ENCODE measurements at regions of chr7 and their contacts with region 1.

Region 1: DNA sequence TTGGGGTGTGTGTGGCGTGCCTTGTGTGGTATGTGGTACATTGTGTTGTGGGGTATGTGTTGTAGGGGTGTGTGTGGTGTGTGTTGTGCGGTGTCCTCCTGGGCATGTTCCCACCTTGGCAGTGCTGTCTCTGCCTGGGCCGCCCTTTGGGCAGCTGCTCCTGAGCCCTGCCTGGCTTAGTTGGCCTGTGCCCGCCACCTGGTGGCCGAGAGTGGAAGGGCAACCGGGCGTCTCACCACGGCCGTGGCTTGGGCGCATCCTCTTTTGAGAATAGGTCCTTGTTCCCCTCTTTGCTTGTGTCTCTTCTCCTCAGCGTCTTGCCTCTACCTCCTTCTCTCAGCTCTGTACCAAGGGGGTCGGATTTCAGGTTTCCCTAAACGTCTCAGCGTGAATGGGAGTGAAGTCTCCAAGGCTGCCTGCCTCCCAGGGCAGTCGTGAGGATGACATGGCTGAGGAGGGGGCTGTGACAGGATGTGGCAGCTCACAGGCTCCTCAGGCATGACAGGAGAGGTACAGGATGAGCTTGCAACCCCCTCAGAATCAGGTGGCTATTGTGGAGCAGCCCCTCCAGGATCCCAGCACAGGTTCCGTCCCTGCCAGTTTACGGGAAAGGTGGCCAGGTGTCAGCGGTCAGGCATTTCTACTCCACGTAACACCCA is 98.4 kb upstream of the PODXL start:
- DNase-seq: peak; percentile 92
- ATAC-seq: peak; percentile 83

Region 2: DNA sequence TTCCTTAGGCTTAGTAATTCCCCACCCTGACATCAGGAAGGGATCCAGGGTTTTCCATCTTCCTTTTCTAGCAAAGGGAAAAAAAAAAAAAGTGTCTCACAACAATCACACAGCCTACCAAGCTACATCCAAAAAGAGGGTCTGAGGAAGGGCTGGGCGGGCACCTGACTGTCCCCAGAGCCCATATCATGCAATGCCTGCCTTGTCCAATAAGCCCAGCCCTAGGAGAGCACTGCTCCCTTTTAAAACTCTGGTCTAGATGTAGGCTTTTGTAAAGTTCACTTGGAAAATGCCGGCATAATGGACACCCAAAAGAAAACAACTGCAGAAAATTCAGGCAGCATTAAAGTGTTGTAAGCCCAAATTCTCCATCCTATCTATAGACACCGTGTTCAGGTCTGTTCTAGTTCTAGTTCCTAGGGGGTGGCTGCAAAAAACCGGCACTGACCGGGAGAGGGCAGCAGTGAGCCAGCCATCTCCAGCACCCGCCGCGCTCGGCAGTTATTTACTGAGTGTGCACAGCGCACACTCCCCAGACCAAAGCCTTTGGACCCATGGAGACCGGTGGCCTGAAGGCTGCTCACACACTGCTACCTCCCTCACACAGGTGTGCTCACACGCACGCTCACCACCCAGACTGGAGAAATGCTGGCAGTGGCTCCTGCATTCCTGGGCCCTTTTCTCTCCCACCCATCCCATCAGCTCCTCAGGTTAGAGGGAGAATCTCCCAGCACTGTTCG is 147.0 kb before region 1 on chr7:
- intact Hi-C with region 1: loop called (anchors 1 kb)
- DNase-seq: peak; percentile 93
- ATAC-seq: peak; percentile 79

Region 3: GRCh38 chr7:131546583-131547111 is 108.2 kb before region 1 on chr7:
- intact Hi-C with region 1: loop called (anchors 2 kb)
- DNase-seq: peak; percentile 37
- ATAC-seq: no peak

Region 4: GRCh38 chr7:131562941-131563340 is 91.9 kb before region 1 on chr7:
- intact Hi-C with region 1: no loop called
- DNase-seq: no peak
- ATAC-seq: no peak

Region 5: DNA sequence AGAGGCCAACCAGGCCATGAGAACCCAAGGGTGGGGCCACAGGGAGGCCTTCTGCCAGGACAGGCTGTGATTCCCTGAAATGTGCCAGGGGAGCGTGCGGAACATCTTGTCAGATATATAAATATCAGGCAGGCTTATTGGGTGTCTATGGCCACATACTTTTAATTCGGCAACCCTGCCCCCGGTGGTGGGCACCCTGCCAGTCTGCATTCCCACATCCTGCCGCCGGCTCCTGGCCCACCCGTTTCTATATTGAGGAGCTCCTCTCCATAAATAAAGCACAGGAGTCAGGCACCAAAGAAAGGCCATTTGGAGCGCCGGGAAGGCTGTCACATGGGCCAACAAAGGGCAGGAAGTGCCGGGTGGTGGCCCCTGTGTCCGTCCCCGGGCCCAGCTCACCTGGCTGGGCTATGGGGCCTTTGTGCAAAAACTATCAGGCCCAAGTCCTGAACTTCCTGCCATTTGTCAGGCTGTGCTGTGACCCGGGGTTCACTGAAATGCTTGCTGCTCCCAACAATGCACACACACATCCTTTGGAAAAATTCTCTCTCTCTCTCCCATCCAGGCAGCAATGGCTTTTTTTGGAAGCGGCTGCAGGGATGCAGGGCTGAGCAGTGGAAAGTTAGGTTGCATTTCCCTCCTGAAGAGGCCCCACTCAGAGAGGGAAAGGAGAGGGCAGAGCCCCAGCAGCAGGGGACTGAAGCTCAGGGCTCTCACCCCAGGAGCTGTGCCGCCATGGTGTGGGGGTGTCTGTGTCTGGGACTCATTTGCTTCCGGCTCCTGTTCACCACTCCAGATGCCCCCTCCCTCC is 73.4 kb before region 1 on chr7:
- intact Hi-C with region 1: loop called (anchors 10 kb)
- DNase-seq: peak; percentile 86
- ATAC-seq: peak; percentile 90

Region 6: DNA sequence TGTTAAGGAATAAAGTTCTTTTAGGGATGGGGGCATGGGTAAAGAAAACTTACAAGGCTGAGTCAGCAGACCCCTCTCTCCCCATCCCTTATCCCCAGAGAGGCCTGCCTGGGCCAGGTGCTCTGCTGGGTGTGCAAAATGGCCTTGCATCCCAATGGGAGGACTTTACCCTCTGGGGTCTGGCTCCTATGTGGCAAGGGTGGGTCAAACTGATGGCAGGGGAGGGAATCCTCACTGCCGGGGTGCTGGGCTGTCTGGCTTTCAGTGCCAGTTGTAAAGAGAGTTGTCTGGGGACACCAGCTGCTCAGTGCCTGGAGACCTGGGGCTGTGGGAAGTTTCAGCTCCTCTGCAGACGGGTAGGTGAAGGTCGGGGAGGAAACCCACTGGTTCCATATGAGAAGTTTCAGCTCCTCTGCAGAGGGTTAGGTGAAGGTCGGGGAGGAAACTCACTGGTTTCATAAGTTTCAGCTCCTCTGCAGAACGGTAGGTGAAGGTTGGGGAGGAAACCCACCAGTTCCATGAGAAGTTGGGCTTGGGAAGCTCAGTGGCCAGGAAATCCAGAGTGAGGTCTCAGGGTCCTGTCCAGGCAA is 28.8 kb after region 1 on chr7:
- intact Hi-C with region 1: no loop called
- DNase-seq: no peak
- ATAC-seq: no peak

Region 7: DNA sequence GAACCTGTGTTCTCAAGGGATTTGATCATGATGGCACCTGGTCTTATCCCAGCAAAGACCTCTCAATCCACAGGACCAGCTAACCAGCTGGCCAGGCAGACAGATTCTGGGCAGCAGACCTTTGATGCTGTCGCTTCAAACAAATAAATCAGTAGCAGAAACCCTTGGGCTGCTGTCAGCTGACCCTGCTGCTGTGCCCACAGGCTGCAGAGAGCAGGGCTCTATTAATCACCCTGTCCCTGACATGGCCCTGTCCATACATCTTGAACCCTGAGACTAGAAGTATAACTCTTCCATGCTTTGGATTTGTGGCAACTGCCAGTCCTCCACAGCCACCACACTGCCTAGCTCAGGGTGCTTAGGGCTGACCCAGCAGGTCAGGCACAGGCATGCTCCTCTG is 145.7 kb after region 1 on chr7:
- intact Hi-C with region 1: no loop called
- DNase-seq: no peak
- ATAC-seq: peak; percentile 20